Endothelial cell of umbilical vein (primary cell): ENCODE measurements at regions of chr3 and their contacts with region 1.

Region 1: DNA sequence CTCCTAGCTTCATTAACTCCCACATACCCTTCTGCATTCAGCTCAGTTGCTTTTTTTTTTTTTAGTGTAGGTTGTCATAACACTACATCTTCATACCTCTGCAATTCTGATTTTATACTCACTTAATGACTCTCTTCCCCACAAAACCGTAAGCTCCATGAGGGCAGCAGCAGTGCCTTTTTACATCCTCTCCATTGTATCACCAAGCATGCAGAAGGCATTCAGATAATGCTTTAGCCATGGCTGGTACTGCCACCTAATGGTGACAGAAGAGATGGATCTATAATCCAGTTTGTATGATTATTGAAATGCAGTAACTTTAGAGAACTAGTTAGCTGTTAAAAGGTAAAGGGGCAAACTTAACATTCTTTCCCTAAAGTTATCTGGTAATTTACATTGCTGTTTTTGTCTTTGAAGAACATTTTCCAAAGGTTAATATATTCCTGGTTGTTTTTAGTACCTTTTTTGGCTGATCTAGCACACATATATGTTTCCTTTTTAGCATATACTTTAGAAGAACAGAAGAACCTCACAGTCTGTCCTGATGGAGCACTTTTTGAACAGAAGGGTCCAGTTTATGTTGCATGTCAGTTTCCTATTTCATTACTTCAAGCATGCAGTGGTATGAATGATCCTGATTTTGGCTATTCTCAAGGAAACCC is 36.8 kb downstream of the ATP1B3 start:
- DNase-seq: peak; percentile 71
- H3K4me3 ChIP-seq: no peak overlapping the region
- H3K27ac ChIP-seq: no peak overlapping the region
- H3K4me1 ChIP-seq: no peaks in the 10 kb centered on the region
- H3K27me3 ChIP-seq: no peaks in the 10 kb centered on the region
- CTCF ChIP-seq: peak; percentile 54 to 56
- POLR2A ChIP-seq: no peak

Region 2: GRCh38 chr3:141575879-141576743 is 337.2 kb before region 1 on chr3:
- CTCF ChIA-PET with region 1: interaction called, 4 read pairs
- POLR2A ChIA-PET with region 1: no interaction called
- dilution Hi-C with region 1: no loop called
- intact Hi-C with region 1: loop called (anchors 1 kb)
- DNase-seq: peak; percentile 43
- H3K4me3 ChIP-seq: no peak overlapping the region
- H3K27ac ChIP-seq: no peak overlapping the region
- H3K4me1 ChIP-seq: no peaks in the 10 kb centered on the region
- H3K27me3 ChIP-seq: no peaks in the 10 kb centered on the region
- CTCF ChIP-seq: peak; percentile 21
- POLR2A ChIP-seq: no peak

Region 3: DNA sequence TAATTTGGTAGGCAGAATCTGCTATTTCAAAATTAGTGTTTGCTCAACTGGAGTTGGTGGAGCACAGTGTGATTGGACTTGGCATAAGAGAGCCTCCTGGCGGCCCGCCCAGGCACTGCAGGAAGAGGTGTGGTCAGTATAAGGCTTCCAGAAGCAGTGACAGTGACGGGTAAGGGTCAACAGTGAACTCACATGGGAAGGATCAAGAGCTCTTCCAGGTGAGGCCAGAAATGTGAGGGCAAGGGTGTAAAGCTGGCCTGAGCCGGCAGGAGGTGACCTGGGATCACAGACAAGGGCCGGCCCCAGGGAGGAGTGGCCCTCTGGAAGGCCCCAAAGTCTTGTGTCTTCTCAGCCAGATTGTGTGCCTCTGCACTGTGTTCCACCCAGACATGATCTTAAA is 268.4 kb before region 1 on chr3:
- CTCF ChIA-PET with region 1: no interaction called
- POLR2A ChIA-PET with region 1: no interaction called
- dilution Hi-C with region 1: no loop called
- intact Hi-C with region 1: loop called (anchors 2 kb)
- DNase-seq: peak; percentile 43
- H3K4me3 ChIP-seq: no peak overlapping the region
- H3K27ac ChIP-seq: no peak overlapping the region
- H3K4me1 ChIP-seq: no peaks in the 10 kb centered on the region
- H3K27me3 ChIP-seq: no peaks in the 10 kb centered on the region
- CTCF ChIP-seq: peak; percentile 76 to 88
- POLR2A ChIP-seq: no peak

Region 4: GRCh38 chr3:141729240-141729639 is 184.0 kb before region 1 on chr3:
- CTCF ChIA-PET with region 1: interaction called, 11 read pairs
- POLR2A ChIA-PET with region 1: no interaction called
- dilution Hi-C with region 1: no loop called
- intact Hi-C with region 1: no loop called
- DNase-seq: no peak
- H3K4me3 ChIP-seq: no peak overlapping the region
- H3K27ac ChIP-seq: no peak overlapping the region
- H3K4me1 ChIP-seq: no peaks in the 10 kb centered on the region
- H3K27me3 ChIP-seq: peaks cover 0 to 2% of the 10 kb centered on the region in 2 experiments
- CTCF ChIP-seq: peak in 1 of 2 donors; percentile 10
- POLR2A ChIP-seq: no peak

Region 5: DNA sequence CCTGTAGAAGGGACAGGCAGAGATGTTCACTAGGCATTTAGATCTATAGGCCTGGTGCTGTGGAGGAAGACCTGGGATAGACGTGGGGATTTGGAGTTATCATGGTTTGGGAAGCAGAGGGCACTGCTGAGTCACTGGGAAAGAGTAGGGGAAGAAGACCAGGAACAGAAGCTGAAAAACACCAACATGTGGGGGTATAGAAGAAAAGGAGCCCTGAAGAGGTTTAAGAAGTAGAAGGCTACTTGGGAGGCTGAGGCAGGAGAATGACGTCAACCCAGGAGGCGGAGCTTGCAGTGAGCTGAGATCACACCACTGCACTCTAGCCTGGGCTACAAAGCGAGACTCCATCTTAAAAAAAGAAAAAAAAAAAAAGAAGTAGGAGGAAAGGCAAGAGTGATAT is 130.8 kb before region 1 on chr3:
- CTCF ChIA-PET with region 1: interaction called, 21 read pairs
- POLR2A ChIA-PET with region 1: no interaction called
- dilution Hi-C with region 1: no loop called
- intact Hi-C with region 1: loop called (anchors 1 kb)
- DNase-seq: peak; percentile 50
- H3K4me3 ChIP-seq: no peak overlapping the region
- H3K27ac ChIP-seq: no peak overlapping the region
- H3K4me1 ChIP-seq: no peaks in the 10 kb centered on the region
- H3K27me3 ChIP-seq: peaks cover 0 to 3% of the 10 kb centered on the region in 2 experiments
- CTCF ChIP-seq: peak in 1 of 2 donors; percentile 40
- POLR2A ChIP-seq: no peak

Region 6: DNA sequence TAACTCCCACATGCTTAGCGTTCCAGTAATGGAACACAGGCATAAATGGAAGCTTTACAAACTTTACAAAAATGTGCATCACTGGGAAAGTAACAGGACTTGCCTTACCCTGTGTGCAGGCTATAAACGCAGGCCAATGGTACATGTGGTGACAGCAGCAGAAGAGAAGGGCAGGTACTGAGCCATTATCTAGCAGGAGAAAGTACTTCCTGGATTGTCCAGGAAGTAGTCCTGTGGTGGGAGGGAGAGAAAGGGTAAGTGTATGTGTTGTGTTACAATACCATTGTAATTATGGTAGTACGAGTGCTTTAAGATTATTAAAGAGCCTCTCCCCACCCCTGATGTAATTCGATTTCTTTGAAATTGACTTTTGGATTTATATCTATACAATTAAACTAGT is 31.6 kb before region 1 on chr3:
- CTCF ChIA-PET with region 1: interaction called, 23 read pairs
- POLR2A ChIA-PET with region 1: no interaction called
- dilution Hi-C with region 1: no loop called
- intact Hi-C with region 1: no loop called
- DNase-seq: no peak
- H3K4me3 ChIP-seq: no peak overlapping the region
- H3K27ac ChIP-seq: no peak overlapping the region
- H3K4me1 ChIP-seq: peaks cover 18% of the 10 kb centered on the region
- H3K27me3 ChIP-seq: no peaks in the 10 kb centered on the region
- CTCF ChIP-seq: no peak
- POLR2A ChIP-seq: no peak

Region 7: DNA sequence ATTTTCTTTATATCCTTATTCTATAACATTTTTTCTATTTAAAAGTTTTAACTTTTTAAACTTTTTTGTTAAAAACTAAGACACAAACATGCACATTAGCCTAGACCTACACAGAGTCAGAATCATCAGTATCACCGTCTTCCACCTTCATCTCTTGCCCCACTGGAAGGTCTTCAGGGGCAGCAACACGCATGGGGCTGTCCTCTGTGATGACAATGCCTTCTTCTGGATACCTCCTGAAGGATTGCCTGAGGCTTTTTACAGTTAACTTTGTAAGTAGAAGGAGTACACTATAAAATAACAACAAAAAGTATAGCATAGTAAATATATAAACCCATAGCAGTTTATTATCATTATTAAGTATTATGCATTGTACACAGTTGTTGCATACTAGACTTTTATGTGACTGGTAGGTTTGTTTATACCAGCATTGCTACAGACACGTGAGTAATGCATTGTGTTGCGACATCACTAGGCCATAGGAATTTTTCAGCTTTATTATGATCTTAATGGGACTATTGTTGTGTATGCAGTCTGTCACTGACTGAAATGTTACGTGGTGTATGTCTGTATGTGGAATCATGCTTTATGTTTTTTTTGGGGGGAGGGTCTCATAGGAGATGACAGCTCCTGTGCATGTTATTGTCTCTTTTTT is 18.6 kb before region 1 on chr3:
- CTCF ChIA-PET with region 1: interaction called, 17 read pairs
- POLR2A ChIA-PET with region 1: interaction called, 4 read pairs
- dilution Hi-C with region 1: no loop called
- intact Hi-C with region 1: no loop called
- DNase-seq: peak; percentile 39
- H3K4me3 ChIP-seq: no peak overlapping the region
- H3K27ac ChIP-seq: no peak overlapping the region
- H3K4me1 ChIP-seq: no peaks in the 10 kb centered on the region
- H3K27me3 ChIP-seq: no peaks in the 10 kb centered on the region
- CTCF ChIP-seq: no peak
- POLR2A ChIP-seq: no peak

Region 8: DNA sequence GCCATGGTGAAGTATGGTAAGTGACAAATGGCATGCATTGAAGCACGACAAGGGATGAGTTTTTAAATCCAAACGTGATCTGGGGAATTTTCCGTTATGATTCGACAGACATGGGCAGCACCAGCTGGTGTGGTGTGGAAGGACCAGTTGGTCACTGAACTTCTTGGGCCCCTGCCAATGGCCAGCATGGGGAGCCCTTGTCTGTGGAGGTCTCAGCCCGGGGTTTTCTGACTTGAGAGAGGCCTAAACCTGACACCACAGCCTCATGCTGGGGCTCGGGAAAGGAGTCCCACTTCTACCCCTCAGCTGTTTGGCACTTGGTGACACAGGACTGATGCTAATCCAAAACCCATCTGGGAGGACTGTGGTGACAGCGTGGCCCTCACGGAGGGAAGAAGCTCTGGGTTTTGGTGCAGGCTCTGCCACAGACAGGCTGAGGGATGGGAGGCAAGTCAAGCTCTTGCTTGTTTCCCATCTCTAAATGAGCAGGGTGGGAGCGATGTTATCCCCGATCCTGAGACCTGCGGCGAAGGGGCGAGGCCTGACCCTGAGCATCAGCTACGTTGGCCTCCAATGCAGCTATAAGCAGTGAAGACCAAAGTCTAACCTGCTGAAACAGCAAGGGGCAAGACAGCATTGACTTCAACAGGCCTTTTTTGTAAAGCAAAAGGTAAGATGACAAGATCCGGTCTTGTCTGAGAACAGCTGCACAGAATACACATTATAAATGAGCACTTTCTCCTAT is 32.6 kb after region 1 on chr3:
- CTCF ChIA-PET with region 1: no interaction called
- POLR2A ChIA-PET with region 1: no interaction called
- dilution Hi-C with region 1: no loop called
- intact Hi-C with region 1: no loop called
- DNase-seq: no peak
- H3K4me3 ChIP-seq: no peak overlapping the region
- H3K27ac ChIP-seq: no peak overlapping the region
- H3K4me1 ChIP-seq: peaks cover 8% of the 10 kb centered on the region
- H3K27me3 ChIP-seq: peaks cover 9 to 22% of the 10 kb centered on the region in 2 experiments
- CTCF ChIP-seq: no peak
- POLR2A ChIP-seq: no peak